Endothelial cell of umbilical vein (primary cell): ENCODE measurements at regions of chrX and their contacts with region 1.

Region 1: GRCh38 chrX:46588263-46588662 is 14.7 kb downstream of the CHST7 start:
- DNase-seq: peak; percentile 79
- H3K4me3 ChIP-seq: peak overlapping the region in 1 of 3 experiments; percentile 55
- H3K27ac ChIP-seq: peak overlapping the region; percentile 93
- H3K4me1 ChIP-seq: peaks cover 41% of the 10 kb centered on the region
- H3K27me3 ChIP-seq: no peaks in the 10 kb centered on the region
- CTCF ChIP-seq: no peak
- POLR2A ChIP-seq: no peak

Region 2: GRCh38 chrX:46354481-46354880 is 233.8 kb before region 1 on chrX:
- CTCF ChIA-PET with region 1: no interaction called
- POLR2A ChIA-PET with region 1: no interaction called
- dilution Hi-C with region 1: no loop called
- intact Hi-C with region 1: no loop called
- DNase-seq: no peak
- H3K4me3 ChIP-seq: no peak overlapping the region
- H3K27ac ChIP-seq: no peak overlapping the region
- H3K4me1 ChIP-seq: no peaks in the 10 kb centered on the region
- H3K27me3 ChIP-seq: no peaks in the 10 kb centered on the region
- CTCF ChIP-seq: no peak
- POLR2A ChIP-seq: no peak

Region 3: DNA sequence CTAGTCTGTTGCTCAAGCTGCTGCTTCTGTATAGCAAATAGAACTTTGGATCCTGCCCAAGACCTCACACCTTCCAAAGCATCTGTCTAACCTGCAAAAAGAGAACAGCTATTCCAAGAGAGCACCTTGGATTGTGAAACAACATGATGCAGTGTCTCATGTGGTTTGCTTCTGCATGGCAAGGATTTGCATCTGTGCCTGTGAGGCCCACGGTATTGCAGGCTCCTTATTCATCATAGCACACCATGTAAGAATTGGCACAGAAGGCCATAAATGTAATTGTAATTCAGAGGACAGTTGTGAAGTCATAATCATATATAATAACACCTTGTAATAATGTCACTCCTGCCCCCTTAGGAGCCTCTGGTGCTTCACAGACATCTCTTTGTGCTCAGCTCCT is 190.1 kb before region 1 on chrX:
- CTCF ChIA-PET with region 1: no interaction called
- POLR2A ChIA-PET with region 1: no interaction called
- dilution Hi-C with region 1: no loop called
- intact Hi-C with region 1: no loop called
- DNase-seq: no peak
- H3K4me3 ChIP-seq: no peak overlapping the region
- H3K27ac ChIP-seq: no peak overlapping the region
- H3K4me1 ChIP-seq: no peaks in the 10 kb centered on the region
- H3K27me3 ChIP-seq: no peaks in the 10 kb centered on the region
- CTCF ChIP-seq: no peak
- POLR2A ChIP-seq: no peak

Region 4: DNA sequence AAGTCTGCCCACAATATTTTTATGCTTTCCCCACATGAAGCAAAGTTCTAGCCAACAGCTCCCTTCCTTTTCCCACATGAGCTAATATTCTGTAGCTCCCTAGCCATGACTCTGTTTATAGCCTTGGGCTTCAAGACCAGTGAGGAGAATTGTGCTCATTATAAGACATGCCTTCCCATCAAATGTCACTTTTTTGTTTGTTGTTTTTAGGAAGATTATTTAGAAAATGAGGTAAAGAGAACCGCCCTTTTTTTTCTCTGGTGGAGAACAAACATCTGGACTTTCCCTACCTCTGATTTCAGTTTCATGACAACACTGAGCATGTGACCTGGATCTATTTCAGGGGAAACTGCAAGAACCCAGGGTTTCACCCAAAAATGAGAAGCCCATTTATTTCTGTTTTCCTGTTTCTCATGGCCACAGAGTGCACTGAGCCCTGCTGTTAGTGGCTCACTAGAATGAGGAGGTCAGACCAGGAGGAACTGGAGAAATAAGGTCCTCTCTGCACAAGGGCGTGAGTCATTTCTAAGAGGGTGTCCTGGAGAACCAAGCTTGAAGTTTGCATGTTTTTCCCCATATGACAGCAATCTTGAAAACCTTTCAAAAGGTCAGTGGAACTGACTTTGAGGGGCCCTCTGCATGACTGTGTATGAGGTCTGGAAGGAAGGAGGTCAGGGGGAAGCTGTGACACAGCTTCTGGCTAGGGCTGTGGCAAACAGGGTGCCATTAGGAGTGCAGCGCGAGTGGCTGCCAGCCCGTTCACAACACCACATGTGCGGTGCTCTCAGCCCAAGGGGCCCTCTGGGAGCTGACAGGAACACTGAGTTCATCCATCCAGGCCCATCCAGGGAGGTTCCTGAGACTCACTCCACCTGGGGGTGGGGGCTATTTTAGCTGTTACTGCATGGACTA is 40.5 kb after region 1 on chrX:
- CTCF ChIA-PET with region 1: no interaction called
- POLR2A ChIA-PET with region 1: interaction called, 12 read pairs
- dilution Hi-C with region 1: no loop called
- intact Hi-C with region 1: loop called (anchors 1 kb)
- DNase-seq: peak; percentile 47
- H3K4me3 ChIP-seq: no peak overlapping the region
- H3K27ac ChIP-seq: peak overlapping the region; percentile 39
- H3K4me1 ChIP-seq: peaks cover 32% of the 10 kb centered on the region
- H3K27me3 ChIP-seq: no peaks in the 10 kb centered on the region
- CTCF ChIP-seq: no peak
- POLR2A ChIP-seq: no peak

Region 5: GRCh38 chrX:46642145-46642544 is 53.9 kb after region 1 on chrX:
- CTCF ChIA-PET with region 1: interaction called, 17 read pairs
- POLR2A ChIA-PET with region 1: no interaction called
- dilution Hi-C with region 1: no loop called
- intact Hi-C with region 1: no loop called
- DNase-seq: peak; percentile 42
- H3K4me3 ChIP-seq: no peak overlapping the region
- H3K27ac ChIP-seq: no peak overlapping the region
- H3K4me1 ChIP-seq: peaks cover 3% of the 10 kb centered on the region
- H3K27me3 ChIP-seq: no peaks in the 10 kb centered on the region
- CTCF ChIP-seq: peak in 1 of 2 donors; percentile 16
- POLR2A ChIP-seq: no peak

Region 6: DNA sequence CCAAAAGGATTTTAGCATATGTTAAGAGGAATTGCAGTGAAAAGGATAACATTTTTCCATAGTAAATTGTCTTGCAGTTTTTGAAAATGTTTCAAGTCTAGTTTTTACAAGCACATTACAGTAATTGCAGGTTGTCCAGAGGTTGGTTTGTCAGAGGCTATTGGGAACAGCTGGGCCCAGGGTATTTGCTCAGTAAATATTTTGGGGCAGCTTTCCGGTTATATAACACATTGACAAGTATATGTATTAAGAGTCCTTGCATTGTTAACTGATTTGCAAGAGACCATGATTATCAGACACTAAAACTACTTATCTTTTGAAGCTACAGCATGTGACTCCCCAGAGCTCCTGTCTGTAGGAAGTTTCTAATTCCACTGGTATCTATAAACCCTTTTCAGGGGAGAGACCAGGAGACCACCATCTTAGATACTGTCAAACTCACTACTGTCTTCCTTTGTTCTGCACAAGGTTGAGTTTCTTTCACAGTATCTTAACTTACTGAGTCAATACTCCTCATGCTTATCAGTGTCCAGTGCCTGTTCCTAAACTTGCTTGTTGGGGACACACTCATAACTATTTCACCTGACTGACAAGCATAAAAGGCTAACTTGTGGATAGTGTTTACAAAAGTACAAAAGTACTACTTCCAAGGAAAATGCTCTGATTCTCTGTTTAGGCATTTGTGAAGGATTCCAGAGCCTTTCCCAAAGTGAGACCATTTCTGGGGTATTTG is 471.0 kb after region 1 on chrX:
- CTCF ChIA-PET with region 1: no interaction called
- POLR2A ChIA-PET with region 1: no interaction called
- dilution Hi-C with region 1: no loop called
- intact Hi-C with region 1: no loop called
- DNase-seq: no peak
- H3K4me3 ChIP-seq: no peak overlapping the region
- H3K27ac ChIP-seq: no peak overlapping the region
- H3K4me1 ChIP-seq: no peaks in the 10 kb centered on the region
- H3K27me3 ChIP-seq: no peaks in the 10 kb centered on the region
- CTCF ChIP-seq: no peak
- POLR2A ChIP-seq: no peak